Activated naive CD4-positive, alpha-beta T cell treated with anti-CD3 and anti-CD28 coated beads for 36 hours (primary cell): ENCODE measurements at regions of chr1 and their contacts with region 1.

Region 1: GRCh38 chr1:212218911-212219310 is 66.3 kb upstream of the PPP2R5A start:
- DNase-seq: peak; percentile 50
- H3K4me3 Mint-ChIP-seq: no peak overlapping the region
- H3K27ac Mint-ChIP-seq: peak overlapping the region; percentile 21
- H3K4me1 Mint-ChIP-seq: peaks cover 20% of the 10 kb centered on the region
- H3K27me3 Mint-ChIP-seq: no peaks in the 10 kb centered on the region

Region 2: DNA sequence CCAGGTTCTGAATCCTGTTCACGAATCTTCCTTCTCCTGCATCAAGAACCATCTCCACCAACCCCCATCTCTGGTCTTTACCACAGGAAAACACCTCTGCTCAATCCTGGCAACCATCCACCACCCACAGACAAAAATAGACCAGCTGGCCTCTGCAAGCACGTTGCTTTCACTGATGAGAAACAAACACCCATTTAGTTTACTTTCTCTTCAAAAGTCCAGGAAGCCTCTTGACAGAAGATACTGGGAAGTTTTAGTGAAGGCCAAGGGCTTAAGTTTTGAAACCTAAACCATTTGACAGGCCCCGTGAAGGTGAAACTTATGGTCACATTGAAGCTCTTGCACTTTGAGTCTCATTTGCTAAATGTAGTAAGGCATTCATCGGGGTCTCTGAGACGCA is 56.3 kb before region 1 on chr1:
- CTCF ChIA-PET with region 1: no interaction called
- intact Hi-C with region 1: loop called (anchors 5 kb)
- DNase-seq: peak; percentile 60
- H3K4me3 Mint-ChIP-seq: no peak overlapping the region
- H3K27ac Mint-ChIP-seq: no peak overlapping the region
- H3K4me1 Mint-ChIP-seq: peaks cover 32% of the 10 kb centered on the region
- H3K27me3 Mint-ChIP-seq: no peaks in the 10 kb centered on the region

Region 3: GRCh38 chr1:212203630-212204029 is 15.3 kb before region 1 on chr1:
- CTCF ChIA-PET with region 1: no interaction called
- intact Hi-C with region 1: no loop called
- DNase-seq: no peak
- H3K4me3 Mint-ChIP-seq: no peak overlapping the region
- H3K27ac Mint-ChIP-seq: no peak overlapping the region
- H3K4me1 Mint-ChIP-seq: no peaks in the 10 kb centered on the region
- H3K27me3 Mint-ChIP-seq: no peaks in the 10 kb centered on the region

Region 4: DNA sequence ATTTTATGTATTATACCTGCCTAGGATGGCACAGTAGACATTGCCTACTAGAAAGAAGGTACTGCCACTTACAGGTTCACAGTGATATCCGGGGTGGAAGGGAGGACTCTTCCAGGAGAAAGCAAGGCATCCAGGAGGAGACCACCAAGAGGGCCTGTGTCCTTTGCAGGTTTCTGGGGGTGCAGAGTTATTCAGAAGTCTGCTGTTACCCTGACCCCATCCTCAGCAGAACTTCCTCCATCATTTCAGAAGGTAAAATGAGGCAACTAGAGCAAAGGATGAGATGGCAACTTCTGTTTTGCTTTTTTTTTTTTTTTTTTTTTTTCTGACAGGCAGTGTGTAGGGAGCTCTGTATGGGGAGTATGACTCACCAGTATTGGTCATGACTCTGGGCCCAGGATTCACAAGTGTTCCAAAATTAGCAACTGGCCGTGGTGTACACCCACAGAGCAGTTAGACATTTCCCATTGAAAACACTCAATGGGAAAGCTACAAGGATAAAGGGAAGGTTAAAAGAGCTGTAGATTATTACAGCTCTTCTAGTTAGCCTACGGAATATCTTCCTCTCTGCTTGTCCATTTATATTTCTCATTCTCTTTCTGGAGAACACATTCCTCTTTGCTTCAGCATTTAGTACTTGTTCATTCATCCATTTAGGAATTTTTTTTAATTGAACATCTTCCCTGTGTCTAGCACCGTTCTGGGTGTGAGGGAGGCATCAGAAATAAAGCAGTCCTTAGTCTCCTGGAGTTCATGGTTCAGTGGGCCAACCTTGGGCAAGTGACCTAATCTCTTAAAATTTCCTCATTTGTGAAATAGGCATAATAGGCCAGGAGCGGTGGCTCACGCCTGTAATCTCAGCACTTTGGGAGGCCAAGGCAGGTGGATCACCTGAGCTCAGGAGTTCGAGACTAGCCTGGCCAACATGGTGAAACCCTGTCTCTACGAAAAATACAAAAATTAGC is 15.8 kb after region 1 on chr1:
- CTCF ChIA-PET with region 1: no interaction called
- intact Hi-C with region 1: loop called (anchors 1 kb)
- DNase-seq: peak; percentile 60
- H3K4me3 Mint-ChIP-seq: no peak overlapping the region
- H3K27ac Mint-ChIP-seq: peak overlapping the region; percentile 19
- H3K4me1 Mint-ChIP-seq: peaks cover 14% of the 10 kb centered on the region
- H3K27me3 Mint-ChIP-seq: peaks cover 4% of the 10 kb centered on the region